ENCODE measurements at regions of chr1 and their contacts with region 1.

Region 1: DNA sequence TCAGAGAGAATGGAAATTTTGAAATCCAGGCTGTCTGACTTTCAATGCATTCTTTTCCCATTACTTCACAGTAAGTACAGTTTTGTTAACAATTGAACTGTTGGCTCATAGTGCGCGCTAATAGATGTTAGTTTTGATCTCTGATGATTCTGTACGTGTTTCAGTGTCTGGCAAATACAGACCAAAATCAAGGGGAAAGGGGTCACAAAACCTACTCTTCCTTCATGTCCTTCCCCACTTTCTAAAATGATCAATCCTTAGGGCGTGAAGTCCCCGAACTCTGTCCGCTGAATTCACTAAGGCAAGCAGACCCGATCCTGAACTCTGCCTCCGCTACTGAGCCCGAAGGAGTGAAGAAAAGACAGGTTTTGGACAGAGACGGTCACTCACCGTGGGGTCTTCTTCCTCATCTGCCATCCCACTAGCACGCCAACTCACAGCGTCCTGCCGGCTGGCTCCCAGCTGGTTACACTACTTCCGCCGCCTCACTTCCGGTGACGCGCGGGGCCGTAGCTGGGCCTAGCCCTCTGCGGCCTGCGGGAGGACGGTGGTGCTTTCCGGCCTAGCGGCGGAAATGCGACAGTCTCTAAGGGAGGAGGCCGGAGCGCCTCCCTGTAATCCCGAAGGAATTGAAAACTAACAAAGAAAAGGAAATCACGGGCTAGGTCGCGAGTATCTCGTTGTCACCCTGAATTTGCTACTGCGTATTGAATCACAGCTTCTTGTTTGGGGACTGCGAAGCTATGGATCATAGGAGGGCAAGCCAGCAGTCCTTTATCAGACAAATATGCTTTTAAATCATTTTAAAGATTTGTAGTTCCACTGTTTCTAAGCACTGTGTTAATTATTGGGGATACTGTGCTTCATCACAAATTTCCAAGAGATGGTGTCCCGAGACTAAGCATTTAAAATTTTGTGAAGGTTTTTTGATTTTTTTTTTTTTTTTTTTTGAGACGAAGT is at the start of gene TAF13:
- DNase-seq: peak; percentile 92
- H3K4me3 Mint-ChIP-seq: peak within 1 kb of the TSS; percentile 95
- H3K27ac Mint-ChIP-seq: peak within 1 kb of the TSS; percentile 84
- H3K4me1 Mint-ChIP-seq: peaks cover 27% of the 10 kb centered on the region
- H3K27me3 Mint-ChIP-seq: no peaks in the 10 kb centered on the region
- total RNA-seq, gene TAF13: 25.2 to 26.5 TPM

Region 2: GRCh38 chr1:109050266-109050995 is 25.4 kb before region 1 on chr1:
- CTCF ChIA-PET with region 1: no interaction called
- POLR2A ChIA-PET with region 1: no interaction called
- DNase-seq: no peak
- H3K4me3 Mint-ChIP-seq: no peak overlapping the region
- H3K27ac Mint-ChIP-seq: no peak overlapping the region
- H3K4me1 Mint-ChIP-seq: peaks cover 2% of the 10 kb centered on the region
- H3K27me3 Mint-ChIP-seq: peaks cover 1% of the 10 kb centered on the region

Region 3: GRCh38 chr1:109090196-109091077 is 14.6 kb after region 1 on chr1 and contains the start of gene TMEM167B:
- CTCF ChIA-PET with region 1: interaction called, 12 read pairs
- POLR2A ChIA-PET with region 1: interaction called, 20 read pairs
- DNase-seq: peak; percentile 91
- H3K4me3 Mint-ChIP-seq: peak within 1 kb of the TSS; percentile 85
- H3K27ac Mint-ChIP-seq: peak within 1 kb of the TSS; percentile 82
- H3K4me1 Mint-ChIP-seq: peaks cover 44% of the 10 kb centered on the region
- H3K27me3 Mint-ChIP-seq: no peaks in the 10 kb centered on the region
- total RNA-seq, gene TMEM167B: 29.6 to 31.8 TPM

Region 4: DNA sequence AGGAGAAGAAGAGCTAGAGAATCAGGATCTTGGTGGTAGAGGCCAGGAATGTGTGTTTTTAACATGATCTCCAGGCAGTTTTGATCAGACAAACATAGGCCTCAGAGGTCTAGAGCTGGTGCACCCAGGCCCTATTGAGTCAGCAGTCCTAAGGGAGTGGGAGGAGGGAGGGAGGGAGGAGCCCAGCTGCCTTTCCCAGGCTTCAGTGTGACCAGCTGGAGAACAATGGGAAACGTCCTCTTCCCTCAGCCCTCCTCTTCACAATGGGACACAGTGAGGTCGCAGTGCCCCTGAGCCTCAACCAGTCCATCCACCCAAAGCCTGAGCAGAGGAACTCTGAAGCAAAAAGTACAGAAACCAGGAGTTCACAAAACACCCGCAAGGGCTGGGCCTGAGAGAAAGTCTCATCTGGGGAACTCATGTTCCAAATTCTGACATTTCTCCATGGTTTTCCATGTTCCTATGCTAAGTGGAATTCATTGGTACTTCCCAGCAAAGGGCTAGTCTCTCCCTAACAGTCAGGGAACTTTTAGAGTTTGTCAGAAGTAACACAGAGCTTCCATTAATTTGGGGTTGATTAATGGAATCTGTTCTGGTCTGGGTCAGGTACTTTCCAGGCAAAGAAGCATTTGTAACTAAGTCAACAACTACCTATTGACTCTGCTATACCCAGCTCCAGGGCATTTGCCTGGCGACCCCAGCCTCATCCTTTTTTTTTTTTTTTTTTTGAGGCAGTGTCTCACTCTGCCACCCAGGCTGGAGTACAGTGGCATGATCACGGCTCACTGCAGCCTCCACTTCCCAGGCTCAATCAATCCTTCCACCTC is 75.6 kb after region 1 on chr1:
- CTCF ChIA-PET with region 1: no interaction called
- POLR2A ChIA-PET with region 1: no interaction called
- DNase-seq: no peak
- H3K4me3 Mint-ChIP-seq: no peak overlapping the region
- H3K27ac Mint-ChIP-seq: no peak overlapping the region
- H3K4me1 Mint-ChIP-seq: no peaks in the 10 kb centered on the region
- H3K27me3 Mint-ChIP-seq: no peaks in the 10 kb centered on the region

Region 5: GRCh38 chr1:109170035-109170764 is 94.4 kb after region 1 on chr1:
- CTCF ChIA-PET with region 1: no interaction called
- POLR2A ChIA-PET with region 1: no interaction called
- DNase-seq: no peak
- H3K4me3 Mint-ChIP-seq: no peak overlapping the region
- H3K27ac Mint-ChIP-seq: no peak overlapping the region
- H3K4me1 Mint-ChIP-seq: peaks cover 21% of the 10 kb centered on the region
- H3K27me3 Mint-ChIP-seq: no peaks in the 10 kb centered on the region

Measured in activated CD4-positive, alpha-beta memory T cell treated with anti-CD3 and anti-CD28 coated beads, Interleukin-2, amount 10 ng/mL, durations not matched to agents 7 days and 5 days (primary cell).